Colonic mucosa (tissue), 4 donors: ENCODE measurements at regions of chr19 and their contacts with region 1.

Region 1: GRCh38 chr19:39328046-39328705 is 7.5 kb upstream of the LRFN1 start:
- DNase-seq: peak; percentile 88
- H3K4me3 ChIP-seq: no peak overlapping the region
- H3K27ac ChIP-seq: no peak overlapping the region
- H3K4me1 ChIP-seq: no peaks in the 10 kb centered on the region
- H3K27me3 ChIP-seq: no peaks in the 10 kb centered on the region
- CTCF ChIP-seq: peak; percentile 94

Region 2: DNA sequence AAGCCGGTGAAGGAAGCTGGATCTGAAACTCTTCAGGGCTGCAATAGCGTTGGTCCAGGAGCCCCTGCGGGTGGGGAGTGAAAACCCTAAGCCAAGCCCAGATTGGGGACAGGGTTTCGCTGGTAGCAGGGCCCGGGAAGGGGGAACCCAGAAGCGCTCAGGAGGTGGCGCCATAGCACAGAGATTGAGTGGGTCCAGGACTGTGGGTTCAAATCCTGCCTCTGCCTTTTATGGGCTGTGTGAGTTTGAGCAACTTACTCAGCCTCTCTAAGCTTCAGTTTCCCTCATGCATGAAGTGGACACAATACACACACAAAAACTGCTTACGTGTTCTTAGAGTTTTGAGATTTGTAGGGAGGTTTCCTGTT is 115.8 kb before region 1 on chr19:
- intact Hi-C with region 1: loop called (anchors 5 kb)
- DNase-seq: peak; percentile 43
- H3K4me3 ChIP-seq: no peak overlapping the region
- H3K27ac ChIP-seq: no peak overlapping the region
- H3K4me1 ChIP-seq: no peaks in the 10 kb centered on the region
- H3K27me3 ChIP-seq: no peaks in the 10 kb centered on the region
- CTCF ChIP-seq: no peak

Region 3: GRCh38 chr19:39351537-39352064 is 23.4 kb after region 1 on chr19:
- intact Hi-C with region 1: no loop called
- DNase-seq: no peak
- H3K4me3 ChIP-seq: no peak overlapping the region
- H3K27ac ChIP-seq: no peak overlapping the region
- H3K4me1 ChIP-seq: no peaks in the 10 kb centered on the region
- H3K27me3 ChIP-seq: no peaks in the 10 kb centered on the region
- CTCF ChIP-seq: no peak

Region 4: GRCh38 chr19:39397360-39398296 is 69.5 kb after region 1 on chr19:
- intact Hi-C with region 1: no loop called
- DNase-seq: peak; percentile 97
- H3K4me3 ChIP-seq: peak overlapping the region; percentile 10
- H3K27ac ChIP-seq: peak overlapping the region; percentile 99
- H3K4me1 ChIP-seq: peaks cover 24% of the 10 kb centered on the region
- H3K27me3 ChIP-seq: no peaks in the 10 kb centered on the region
- CTCF ChIP-seq: peak; percentile 96

Region 5: DNA sequence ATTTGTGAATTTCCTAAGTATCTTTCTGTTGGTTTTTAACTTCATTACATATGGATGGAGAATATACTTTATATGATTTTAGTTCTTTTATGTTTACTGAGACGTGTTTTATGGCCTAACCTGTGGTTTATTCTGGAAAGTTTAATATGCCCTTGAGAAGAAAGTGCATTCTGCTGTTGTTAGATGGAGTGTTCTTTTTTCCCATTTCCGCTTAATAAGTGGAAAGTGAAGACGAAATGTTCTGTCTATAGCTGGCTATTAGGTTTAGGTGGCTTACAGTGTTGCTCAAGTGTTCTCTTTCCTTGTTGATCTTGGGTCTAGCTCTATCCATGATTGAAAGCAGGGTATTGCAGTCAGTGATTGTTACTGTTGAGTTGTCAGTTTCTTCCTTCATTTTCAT is 135.2 kb after region 1 on chr19:
- intact Hi-C with region 1: no loop called
- DNase-seq: no peak
- H3K4me3 ChIP-seq: no peak overlapping the region
- H3K27ac ChIP-seq: no peak overlapping the region
- H3K4me1 ChIP-seq: no peaks in the 10 kb centered on the region
- H3K27me3 ChIP-seq: no peaks in the 10 kb centered on the region
- CTCF ChIP-seq: no peak